ENCODE measurements at regions of chr1 and their contacts with region 1.

Region 1: GRCh38 chr1:58702261-58703141 is 2.6 kb upstream of the MYSM1 start:
- DNase-seq: no peak
- ATAC-seq: no peak
- H3K4me3 ChIP-seq: no peak overlapping the region
- H3K27ac ChIP-seq: no peak overlapping the region
- H3K4me1 ChIP-seq: peaks cover 12% of the 10 kb centered on the region
- H3K27me3 ChIP-seq: no peaks in the 10 kb centered on the region
- CTCF ChIP-seq: no peak

Region 2: DNA sequence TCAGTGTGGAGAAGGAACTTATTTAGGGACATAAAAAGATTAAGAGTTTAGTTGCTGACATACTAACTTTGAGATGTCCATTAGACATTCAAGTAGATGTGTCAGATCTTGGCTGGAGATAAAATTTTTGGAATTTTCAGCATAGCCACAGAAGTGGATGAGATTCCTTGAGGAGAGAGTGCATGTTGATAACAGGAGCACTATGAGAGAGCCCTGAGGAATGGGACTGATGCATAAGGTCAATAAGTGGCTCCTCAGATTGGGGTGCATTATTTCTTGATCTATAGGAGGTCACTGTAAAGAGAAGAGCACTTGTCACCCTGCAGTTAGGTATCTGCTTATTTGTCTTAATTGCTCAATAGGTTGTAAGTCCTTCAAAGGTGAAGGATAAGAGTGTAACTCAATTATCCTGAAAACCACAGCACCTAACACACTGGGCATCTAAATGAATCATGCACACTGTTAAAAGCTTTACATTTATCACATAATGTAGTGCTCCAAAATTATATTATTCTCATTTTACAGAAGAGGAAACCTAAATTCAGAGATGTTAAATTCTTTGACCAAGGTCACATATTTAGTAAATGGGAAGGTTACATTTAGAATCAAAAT is 73.4 kb before region 1 on chr1:
- CTCF ChIA-PET with region 1: no interaction called
- POLR2A ChIA-PET with region 1: no interaction called
- in situ Hi-C with region 1: no loop called
- intact Hi-C with region 1: no loop called
- DNase-seq: no peak
- ATAC-seq: no peak
- H3K4me3 ChIP-seq: no peak overlapping the region
- H3K27ac ChIP-seq: no peak overlapping the region
- H3K4me1 ChIP-seq: no peaks in the 10 kb centered on the region
- H3K27me3 ChIP-seq: no peaks in the 10 kb centered on the region; the same call in none of the 2 replicates
- CTCF ChIP-seq: no peak

Region 3: DNA sequence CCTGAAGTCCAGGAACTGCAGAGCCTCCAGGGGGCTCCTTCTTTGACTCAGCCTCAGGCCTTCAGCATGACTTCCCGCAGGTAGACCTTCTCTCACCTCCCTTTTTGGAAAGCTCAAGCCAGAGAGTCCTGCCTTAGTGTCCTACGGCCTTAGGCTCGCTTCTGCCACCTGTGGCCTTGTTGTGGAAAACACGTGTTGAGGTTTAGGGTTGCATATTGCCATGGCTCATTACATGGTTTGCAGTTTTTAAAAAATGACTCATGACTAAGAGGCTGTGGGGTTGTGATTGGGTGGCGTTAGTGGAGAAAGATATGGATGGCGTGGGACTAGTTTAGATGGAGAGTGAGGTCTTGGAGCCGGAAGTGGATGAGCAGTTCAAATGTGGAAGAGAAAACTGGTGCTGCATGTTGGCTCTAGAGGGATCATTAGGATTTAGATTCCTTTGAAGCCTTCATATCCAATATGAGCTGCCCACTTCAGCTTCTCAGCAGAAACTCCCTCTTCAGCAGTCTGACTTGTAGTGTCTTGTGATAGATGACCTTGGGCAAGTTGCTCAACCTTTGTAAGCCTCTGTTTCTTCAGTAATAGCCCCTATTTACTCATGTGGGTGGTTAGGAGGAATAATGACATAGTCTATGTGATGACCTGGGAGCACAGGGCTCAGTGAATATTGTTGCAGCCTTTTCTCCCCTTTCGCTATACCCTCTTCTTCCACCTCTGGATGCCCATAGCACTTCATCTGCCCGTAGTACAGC is 587.9 kb after region 1 on chr1:
- CTCF ChIA-PET with region 1: interaction called, 12 read pairs
- POLR2A ChIA-PET with region 1: no interaction called
- in situ Hi-C with region 1: no loop called
- intact Hi-C with region 1: no loop called
- DNase-seq: peak; percentile 36
- ATAC-seq: peak; percentile 93
- H3K4me3 ChIP-seq: no peak overlapping the region
- H3K27ac ChIP-seq: no peak overlapping the region
- H3K4me1 ChIP-seq: peaks cover 2% of the 10 kb centered on the region; the same call in 1 of the 2 replicates
- H3K27me3 ChIP-seq: no peaks in the 10 kb centered on the region
- CTCF ChIP-seq: peak; percentile 77